GM12878 (cell line): ENCODE measurements at regions of chr4 and their contacts with region 1.

Region 1: GRCh38 chr4:31045724-31046318 is 325.7 kb downstream of the PCDH7 start:
- DNase-seq: no peak
- ATAC-seq: peak; percentile 66; the same call in 2 of the 3 replicates
- H3K4me3 ChIP-seq: no peak overlapping the region
- H3K27ac ChIP-seq: no peak overlapping the region
- H3K4me1 ChIP-seq: no peaks in the 10 kb centered on the region
- H3K27me3 ChIP-seq: no peaks in the 10 kb centered on the region
- CTCF ChIP-seq: peak; percentile 19 to 38 (median 30); a peak in 2 of 6 replicates
- EP300 ChIP-seq: no peak
- POLR2A ChIP-seq: no peak
- RAD21 ChIP-seq: peak; percentile 6; the same call in 1 of the 2 replicates

Region 2: DNA sequence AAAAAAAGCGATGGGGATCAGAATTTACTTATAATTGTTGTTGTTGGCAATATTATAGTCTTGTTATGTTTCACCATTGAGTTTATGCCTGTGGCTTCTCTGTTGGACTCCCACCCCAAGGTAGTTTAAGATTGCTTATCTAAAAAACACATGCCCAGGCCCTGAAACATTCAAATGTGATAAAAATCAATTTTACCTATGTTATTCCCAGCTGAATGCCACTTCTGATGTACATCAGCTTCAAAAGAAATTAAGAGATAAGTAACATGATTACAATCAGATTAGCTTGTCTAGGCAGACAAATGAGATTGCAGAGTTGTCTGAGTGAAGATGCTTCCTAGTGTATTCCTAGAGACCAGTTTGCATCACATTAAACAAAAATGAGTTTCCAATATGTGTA is 159.1 kb after region 1 on chr4:
- CTCF ChIA-PET with region 1: no interaction called
- POLR2A ChIA-PET with region 1: no interaction called
- RAD21 ChIA-PET with region 1: no interaction called
- SMC1A ChIA-PET with region 1: no interaction called
- in situ Hi-C with region 1: no loop called
- intact Hi-C with region 1: no loop called
- DNase-seq: no peak
- ATAC-seq: no peak
- H3K4me3 ChIP-seq: no peak overlapping the region
- H3K27ac ChIP-seq: no peak overlapping the region
- H3K4me1 ChIP-seq: no peaks in the 10 kb centered on the region
- H3K27me3 ChIP-seq: no peaks in the 10 kb centered on the region
- CTCF ChIP-seq: no peak
- EP300 ChIP-seq: no peak
- POLR2A ChIP-seq: no peak
- RAD21 ChIP-seq: no peak

Region 3: DNA sequence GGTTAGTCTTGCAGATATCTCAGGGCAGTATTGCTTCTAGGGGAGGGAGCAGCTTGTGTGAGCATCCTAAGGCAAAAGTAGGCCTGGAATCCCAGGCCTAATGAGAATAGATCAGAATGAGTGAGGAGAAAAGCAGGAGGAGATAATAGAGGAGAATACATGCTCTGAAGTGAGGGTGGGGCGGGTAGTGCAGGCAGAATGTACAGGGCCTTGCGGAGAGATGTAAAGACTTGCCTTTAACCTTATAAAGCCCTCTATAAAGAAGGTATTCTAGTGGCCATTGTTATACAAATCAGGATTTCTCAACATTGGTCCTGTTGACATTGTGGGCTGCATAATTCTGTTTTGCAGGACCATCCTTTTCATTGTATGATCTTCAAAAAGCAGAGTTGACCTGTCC is 529.7 kb after region 1 on chr4:
- CTCF ChIA-PET with region 1: no interaction called
- POLR2A ChIA-PET with region 1: no interaction called
- RAD21 ChIA-PET with region 1: no interaction called
- SMC1A ChIA-PET with region 1: no interaction called
- in situ Hi-C with region 1: no loop called
- intact Hi-C with region 1: loop called (anchors 10 kb)
- DNase-seq: no peak
- ATAC-seq: no peak
- H3K4me3 ChIP-seq: no peak overlapping the region
- H3K27ac ChIP-seq: no peak overlapping the region
- H3K4me1 ChIP-seq: no peaks in the 10 kb centered on the region
- H3K27me3 ChIP-seq: no peaks in the 10 kb centered on the region
- CTCF ChIP-seq: no peak
- EP300 ChIP-seq: no peak
- POLR2A ChIP-seq: no peak
- RAD21 ChIP-seq: no peak